Caco-2 (cell line): ENCODE measurements at regions of chr17 and their contacts with region 1.

Region 1: GRCh38 chr17:48351831-48352332 is 78.1 kb downstream of the SKAP1 start:
- DNase-seq: peak in 1 of 2 experiments; percentile 56
- H3K4me3 ChIP-seq: no peak overlapping the region
- H3K4me3 Mint-ChIP-seq: no peak overlapping the region
- H3K27ac Mint-ChIP-seq: no peak overlapping the region
- H3K4me1 ChIP-seq: no peaks in the 10 kb centered on the region
- H3K4me1 Mint-ChIP-seq: no peaks in the 10 kb centered on the region
- H3K27me3 ChIP-seq: no peaks in the 10 kb centered on the region; the same call in 1 of the 2 replicates
- H3K27me3 Mint-ChIP-seq: peaks cover 8% of the 10 kb centered on the region
- CTCF ChIP-seq: peak; percentile 90

Region 2: DNA sequence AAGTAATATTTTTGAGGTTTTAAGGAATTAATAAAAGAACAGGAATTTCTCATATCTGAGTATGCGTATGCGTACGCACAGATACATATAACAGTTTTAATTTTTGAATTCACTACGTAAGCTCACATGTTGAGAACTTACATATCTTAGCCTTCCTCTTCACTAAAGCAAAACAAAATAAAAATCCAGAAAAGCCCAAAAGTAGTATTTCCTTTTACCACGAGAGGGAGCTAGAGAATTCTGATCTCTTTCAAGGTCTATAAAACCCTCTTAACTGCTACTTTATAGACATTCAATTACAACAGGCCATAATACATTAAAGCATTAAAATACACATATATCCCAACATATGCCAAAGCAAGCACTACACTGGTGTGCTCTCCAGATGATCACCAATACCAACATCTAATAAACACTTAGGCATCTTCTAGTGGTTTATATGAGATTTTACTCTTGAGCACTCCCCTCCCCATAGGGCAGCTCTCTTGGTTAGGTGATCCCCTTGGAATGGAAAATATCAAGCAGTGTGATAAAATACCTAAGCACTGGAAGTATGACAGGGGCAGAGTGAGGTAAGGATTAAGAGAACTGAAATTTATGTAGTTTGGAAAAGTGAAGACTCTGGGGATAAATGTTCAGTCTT is 15.9 kb before region 1 on chr17:
- CTCF ChIA-PET with region 1: interaction called, 11 read pairs
- POLR2A ChIA-PET with region 1: no interaction called
- intact Hi-C with region 1: no loop called
- DNase-seq: peak in 1 of 2 experiments; percentile 79
- H3K4me3 ChIP-seq: no peak overlapping the region
- H3K4me3 Mint-ChIP-seq: no peak overlapping the region
- H3K27ac Mint-ChIP-seq: no peak overlapping the region
- H3K4me1 ChIP-seq: no peaks in the 10 kb centered on the region
- H3K4me1 Mint-ChIP-seq: no peaks in the 10 kb centered on the region
- H3K27me3 ChIP-seq: no peaks in the 10 kb centered on the region; the same call in 1 of the 2 replicates
- H3K27me3 Mint-ChIP-seq: peaks cover 18% of the 10 kb centered on the region
- CTCF ChIP-seq: peak; percentile 90 to 96

Region 3: GRCh38 chr17:48850792-48851323 is 499.0 kb after region 1 on chr17:
- CTCF ChIA-PET with region 1: no interaction called
- POLR2A ChIA-PET with region 1: no interaction called
- intact Hi-C with region 1: no loop called
- DNase-seq: no peak
- H3K4me3 ChIP-seq: no peak overlapping the region
- H3K4me3 Mint-ChIP-seq: no peak overlapping the region
- H3K27ac Mint-ChIP-seq: no peak overlapping the region
- H3K4me1 ChIP-seq: peaks cover 18% of the 10 kb centered on the region
- H3K4me1 Mint-ChIP-seq: peaks cover 10% of the 10 kb centered on the region
- H3K27me3 ChIP-seq: no peaks in the 10 kb centered on the region
- H3K27me3 Mint-ChIP-seq: no peaks in the 10 kb centered on the region
- CTCF ChIP-seq: no peak